ENCODE measurements at regions of chr7 and their contacts with region 1.

Region 1: DNA sequence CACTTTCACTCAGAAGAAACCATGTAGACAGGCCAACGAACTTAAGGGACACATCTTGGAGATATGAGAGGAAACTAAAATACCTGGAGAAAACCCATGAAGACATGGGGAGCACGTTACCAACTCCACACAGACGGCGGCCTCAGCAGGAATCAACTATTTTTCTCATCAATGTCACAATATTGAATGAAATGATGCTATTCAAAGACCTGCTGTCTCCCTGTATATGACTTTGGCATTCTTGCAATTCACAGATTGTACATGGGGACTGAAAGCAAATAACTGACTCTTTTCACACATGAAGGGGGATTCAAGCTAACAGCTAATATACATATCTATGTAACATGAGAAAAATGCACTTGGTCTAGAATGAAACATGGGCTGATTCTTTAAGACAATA is 869.0 kb downstream of the NXPH1 start:
- DNase-seq: no peak
- ATAC-seq: no peak
- H3K4me3 ChIP-seq: no peak overlapping the region
- H3K27ac ChIP-seq: no peak overlapping the region
- H3K4me1 ChIP-seq: no peaks in the 10 kb centered on the region
- H3K27me3 ChIP-seq: no peaks in the 10 kb centered on the region
- CTCF ChIP-seq: no peak
- EP300 ChIP-seq: no peak
- POLR2A ChIP-seq: no peak
- RAD21 ChIP-seq: no peak

Region 2: DNA sequence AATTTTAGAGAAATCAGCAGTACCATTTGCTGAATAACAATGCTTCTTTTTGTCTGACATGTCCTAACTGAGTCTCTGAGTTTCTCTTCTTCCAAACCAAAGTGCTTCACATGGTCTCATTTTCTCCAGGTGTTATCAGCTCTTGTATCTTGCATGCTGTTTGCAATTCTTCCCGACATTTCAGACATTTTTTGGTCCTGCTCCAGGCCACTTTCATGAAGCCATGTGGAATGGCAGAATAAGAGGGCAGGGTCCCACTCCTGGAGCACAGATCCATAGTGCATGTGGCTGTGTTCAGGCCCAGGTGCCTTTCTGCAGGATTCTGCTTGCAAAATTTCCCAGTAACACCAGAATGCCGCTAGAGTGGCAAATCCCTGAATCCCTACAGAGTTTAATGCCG is 47.2 kb after region 1 on chr7:
- CTCF ChIA-PET with region 1: no interaction called
- POLR2A ChIA-PET with region 1: no interaction called
- in situ Hi-C with region 1: no loop called
- intact Hi-C with region 1: no loop called
- DNase-seq: no peak
- ATAC-seq: no peak
- H3K4me3 ChIP-seq: no peak overlapping the region
- H3K27ac ChIP-seq: no peak overlapping the region
- H3K4me1 ChIP-seq: no peaks in the 10 kb centered on the region
- H3K27me3 ChIP-seq: no peaks in the 10 kb centered on the region
- CTCF ChIP-seq: no peak
- EP300 ChIP-seq: no peak
- POLR2A ChIP-seq: no peak
- RAD21 ChIP-seq: no peak

Region 3: GRCh38 chr7:9557853-9558252 is 255.4 kb after region 1 on chr7:
- CTCF ChIA-PET with region 1: no interaction called
- POLR2A ChIA-PET with region 1: no interaction called
- in situ Hi-C with region 1: no loop called
- intact Hi-C with region 1: loop called (anchors 10 kb)
- DNase-seq: no peak
- ATAC-seq: no peak
- H3K4me3 ChIP-seq: no peak overlapping the region
- H3K27ac ChIP-seq: no peak overlapping the region
- H3K4me1 ChIP-seq: no peaks in the 10 kb centered on the region
- H3K27me3 ChIP-seq: no peaks in the 10 kb centered on the region
- CTCF ChIP-seq: no peak
- EP300 ChIP-seq: no peak
- POLR2A ChIP-seq: no peak
- RAD21 ChIP-seq: no peak